ENCODE measurements at regions of chr11 and their contacts with region 1.

Region 1: GRCh38 chr11:7353100-7353499 is 101.4 kb downstream of the SYT9 start:
- DNase-seq: peak in 1 of 2 experiments; percentile 60
- H3K4me3 ChIP-seq: 0 out of 8 replicates have a peak overlapping the region, but pooled peaks of 1 of the 4 experiments have one; percentile 3
- H3K27ac ChIP-seq: no peak overlapping the region
- H3K4me1 ChIP-seq: peaks cover 0 to 4% (median 1%) of the 10 kb centered on the region in 4 experiments; a peak in 3 of 7 replicates
- H3K27me3 ChIP-seq: peaks cover 0 to 1% (median 0%) of the 10 kb centered on the region in 4 experiments; a peak in 1 of 7 replicates
- CTCF ChIP-seq: peak; percentile 32 to 81 (median 69)
- EP300 ChIP-seq: no peak
- POLR2A ChIP-seq: no peak
- RAD21 ChIP-seq: peak; percentile 74 to 80

Region 2: DNA sequence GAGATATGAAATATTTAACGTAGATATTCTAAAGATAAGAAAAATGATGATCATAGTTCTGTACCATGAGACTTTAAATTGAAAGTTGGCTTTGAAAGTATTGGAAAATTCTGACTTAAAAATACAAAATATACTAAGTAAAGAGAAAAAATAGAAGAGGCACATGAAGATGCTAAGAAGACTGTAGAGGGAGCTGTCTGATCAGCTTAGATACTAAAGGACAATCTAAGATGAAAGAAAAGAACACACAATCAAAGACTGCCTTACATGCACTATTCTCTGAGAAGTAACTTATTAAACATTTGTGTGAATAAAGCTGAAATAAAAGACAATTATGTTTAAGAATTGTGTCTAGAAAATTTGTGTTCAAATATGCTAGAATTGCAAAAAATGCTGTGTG is 209.2 kb before region 1 on chr11:
- CTCF ChIA-PET with region 1: interaction called, 18 read pairs
- POLR2A ChIA-PET with region 1: no interaction called
- DNase-seq: no peak
- H3K4me3 ChIP-seq: no peak overlapping the region
- H3K27ac ChIP-seq: no peak overlapping the region
- H3K4me1 ChIP-seq: no peaks in the 10 kb centered on the region
- H3K27me3 ChIP-seq: no peaks in the 10 kb centered on the region
- CTCF ChIP-seq: peak in 2 of 3 experiments; percentile 28 to 38; a peak in 2 of 4 replicates
- EP300 ChIP-seq: no peak
- POLR2A ChIP-seq: no peak
- RAD21 ChIP-seq: peak; percentile 65 to 78

Region 3: DNA sequence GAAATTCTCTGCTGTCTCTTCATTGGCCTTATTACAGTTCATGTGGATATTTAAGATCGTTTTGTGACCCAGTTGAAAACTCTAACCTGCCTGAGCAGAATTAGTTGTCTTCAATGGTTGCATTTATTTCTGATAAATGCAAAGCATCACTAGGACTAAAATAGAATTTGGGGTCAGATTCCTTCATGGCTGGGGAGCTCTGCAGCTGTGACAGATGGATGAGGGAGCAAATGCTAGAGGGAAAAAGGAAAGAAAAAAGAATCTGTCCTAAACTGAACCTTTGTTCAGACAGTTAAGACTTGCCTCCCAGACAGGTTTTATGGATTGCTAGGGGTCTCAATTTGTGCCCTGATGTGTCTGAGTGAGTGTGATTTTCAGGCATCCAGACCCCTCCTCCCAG is 11.6 kb after region 1 on chr11:
- CTCF ChIA-PET with region 1: interaction called, 19 read pairs
- POLR2A ChIA-PET with region 1: no interaction called
- DNase-seq: no peak
- H3K4me3 ChIP-seq: no peak overlapping the region
- H3K27ac ChIP-seq: no peak overlapping the region
- H3K4me1 ChIP-seq: no peaks in the 10 kb centered on the region
- H3K27me3 ChIP-seq: peaks cover 0 to 1% (median 0%) of the 10 kb centered on the region in 4 experiments; a peak in 1 of 7 replicates
- CTCF ChIP-seq: no peak
- EP300 ChIP-seq: no peak
- POLR2A ChIP-seq: no peak
- RAD21 ChIP-seq: no peak

Region 4: DNA sequence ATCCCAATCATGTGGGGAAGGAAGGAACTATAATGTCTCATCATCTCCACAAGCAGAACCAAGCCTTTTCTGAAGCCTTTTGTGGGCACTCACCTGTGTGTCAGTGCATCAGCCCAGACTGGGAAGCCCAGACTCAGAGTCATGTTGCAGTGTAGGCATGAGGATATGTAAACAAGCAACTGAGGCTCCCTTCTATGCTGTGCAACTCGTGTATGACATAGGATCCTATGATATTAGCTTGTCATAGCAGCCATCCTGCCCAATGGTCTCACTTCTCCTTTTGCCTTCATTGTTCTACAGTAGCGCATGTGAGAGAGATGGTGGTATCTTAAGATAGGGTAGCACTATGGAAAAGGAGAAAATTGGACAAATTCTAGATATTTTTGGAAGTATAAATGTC is 28.8 kb after region 1 on chr11:
- CTCF ChIA-PET with region 1: interaction called, 10 read pairs
- POLR2A ChIA-PET with region 1: no interaction called
- DNase-seq: no peak
- H3K4me3 ChIP-seq: no peak overlapping the region
- H3K27ac ChIP-seq: no peak overlapping the region
- H3K4me1 ChIP-seq: no peaks in the 10 kb centered on the region
- H3K27me3 ChIP-seq: no peaks in the 10 kb centered on the region
- CTCF ChIP-seq: no peak
- EP300 ChIP-seq: no peak
- POLR2A ChIP-seq: no peak
- RAD21 ChIP-seq: no peak

Region 5: GRCh38 chr11:7436657-7437056 is 83.6 kb after region 1 on chr11:
- CTCF ChIA-PET with region 1: interaction called, 171 read pairs
- POLR2A ChIA-PET with region 1: no interaction called
- DNase-seq: no peak
- H3K4me3 ChIP-seq: no peak overlapping the region
- H3K27ac ChIP-seq: no peak overlapping the region
- H3K4me1 ChIP-seq: peaks cover 0 to 3% (median 0%) of the 10 kb centered on the region in 4 experiments; a peak in 3 of 7 replicates
- H3K27me3 ChIP-seq: no peaks in the 10 kb centered on the region
- CTCF ChIP-seq: no peak
- EP300 ChIP-seq: no peak
- POLR2A ChIP-seq: no peak
- RAD21 ChIP-seq: no peak

Region 6: GRCh38 chr11:7449211-7449840 is 96.2 kb after region 1 on chr11:
- CTCF ChIA-PET with region 1: interaction called, 171 read pairs
- POLR2A ChIA-PET with region 1: no interaction called
- DNase-seq: no peak
- H3K4me3 ChIP-seq: no peak overlapping the region
- H3K27ac ChIP-seq: no peak overlapping the region
- H3K4me1 ChIP-seq: no peaks in the 10 kb centered on the region; a peak in 1 of 7 replicates
- H3K27me3 ChIP-seq: no peaks in the 10 kb centered on the region
- CTCF ChIP-seq: no peak
- EP300 ChIP-seq: no peak
- POLR2A ChIP-seq: no peak
- RAD21 ChIP-seq: no peak

Region 7: GRCh38 chr11:7480113-7480512 is 127.0 kb after region 1 on chr11:
- CTCF ChIA-PET with region 1: no interaction called
- POLR2A ChIA-PET with region 1: no interaction called
- DNase-seq: no peak
- H3K4me3 ChIP-seq: no peak overlapping the region
- H3K27ac ChIP-seq: no peak overlapping the region
- H3K4me1 ChIP-seq: no peaks in the 10 kb centered on the region; a peak in 1 of 7 replicates
- H3K27me3 ChIP-seq: no peaks in the 10 kb centered on the region
- CTCF ChIP-seq: no peak
- EP300 ChIP-seq: no peak
- POLR2A ChIP-seq: no peak
- RAD21 ChIP-seq: no peak

Region 8: GRCh38 chr11:7555052-7555699 is 202.1 kb after region 1 on chr11:
- CTCF ChIA-PET with region 1: no interaction called
- POLR2A ChIA-PET with region 1: no interaction called
- DNase-seq: no peak
- H3K4me3 ChIP-seq: no peak overlapping the region
- H3K27ac ChIP-seq: no peak overlapping the region
- H3K4me1 ChIP-seq: peaks cover 0 to 3% (median 0%) of the 10 kb centered on the region in 4 experiments; a peak in 2 of 7 replicates
- H3K27me3 ChIP-seq: no peaks in the 10 kb centered on the region
- CTCF ChIP-seq: no peak
- EP300 ChIP-seq: no peak
- POLR2A ChIP-seq: no peak
- RAD21 ChIP-seq: no peak